ENCODE measurements at regions of chr13 and their contacts with region 1.

Region 1: GRCh38 chr13:76886292-76887075 is at the start of gene KCTD12:
- DNase-seq: peak; percentile 94
- ATAC-seq: peak; percentile 85
- total RNA-seq, gene KCTD12: 67.1 to 67.9 TPM

Region 2: GRCh38 chr13:76707360-76707759 is 179.1 kb before region 1 on chr13:
- intact Hi-C with region 1: no loop called
- DNase-seq: no peak
- ATAC-seq: no peak

Region 3: GRCh38 chr13:76822698-76823267 is 63.7 kb before region 1 on chr13:
- intact Hi-C with region 1: loop called in 1 of 2 experiments (anchors 10 kb)
- DNase-seq: no peak
- ATAC-seq: peak; percentile 32 to 49

Measured in left cardiac atrium (tissue), 4 donors.